Naive thymus-derived CD4-positive, alpha-beta T cell (primary cell): ENCODE measurements at regions of chr9 and their contacts with region 1.

Region 1: DNA sequence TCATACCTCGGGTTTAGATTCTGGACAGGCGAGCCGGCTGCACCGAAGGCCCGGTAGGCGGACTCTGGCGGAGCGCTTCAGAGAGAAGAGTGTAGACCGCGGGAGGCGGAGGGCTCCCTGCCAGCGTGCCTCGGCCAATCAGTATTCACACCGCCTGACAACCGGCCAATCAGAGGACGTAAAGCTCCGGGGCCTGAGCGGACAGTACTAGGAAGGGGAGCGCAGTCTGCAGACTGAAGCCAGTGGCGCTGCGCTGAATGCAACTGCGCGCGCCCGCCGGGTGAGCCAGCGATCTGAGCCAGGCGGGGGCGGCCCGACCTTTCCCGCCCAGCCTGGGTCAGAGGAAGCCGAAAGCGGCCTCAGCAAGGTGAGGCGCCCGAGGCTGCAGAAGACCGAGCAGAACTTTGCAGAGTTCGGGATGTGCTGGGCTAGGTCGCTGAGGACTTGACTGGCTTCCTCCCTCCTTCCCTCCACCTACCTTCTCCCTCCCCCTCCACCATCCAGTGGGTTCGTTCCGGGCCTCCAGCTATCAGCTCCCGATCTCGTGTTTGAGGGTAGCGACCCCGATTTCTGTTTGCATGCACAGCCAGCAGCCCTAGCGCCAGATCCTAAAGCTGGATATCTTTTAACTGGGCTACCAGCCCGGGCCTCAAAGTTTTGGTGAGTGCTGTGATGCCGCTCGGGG is at the start of gene DMRT2:
- DNase-seq: no peak
- ATAC-seq: peak; percentile 26
- H3K4me3 ChIP-seq: no peak within 1 kb of the TSS
- H3K4me3 Mint-ChIP-seq: peak within 1 kb of the TSS; percentile 31 to 91 (median 72)
- H3K27ac ChIP-seq: no peak within 1 kb of the TSS
- H3K27ac Mint-ChIP-seq: peak within 1 kb of the TSS in 2 of 9 donors; percentile 56 to 81
- H3K4me1 ChIP-seq: peaks cover 11 to 32% of the 10 kb centered on the region in 2 donors
- H3K4me1 Mint-ChIP-seq: peaks cover 38 to 62% (median 51%) of the 10 kb centered on the region in 7 donors
- H3K27me3 ChIP-seq: peaks cover 6 to 55% of the 10 kb centered on the region in 2 donors
- H3K27me3 Mint-ChIP-seq: peaks cover 79 to 94% (median 87%) of the 10 kb centered on the region in 5 donors
- total RNA-seq, gene DMRT2: 0.44 TPM in 1 of 5 experiments, not detected in the others

Region 2: GRCh38 chr9:841371-842209 is 208.7 kb before region 1 on chr9 and contains the start of gene DMRT1:
- CTCF ChIA-PET with region 1: no interaction called
- POLR2A ChIA-PET with region 1: no interaction called
- intact Hi-C with region 1: loop called in 1 of 2 experiments (anchors 2 kb)
- DNase-seq: no peak
- ATAC-seq: no peak
- H3K4me3 ChIP-seq: no peak within 1 kb of the TSS
- H3K4me3 Mint-ChIP-seq: peak within 1 kb of the TSS in 4 of 10 donors; percentile 20 to 62 (median 38)
- H3K27ac ChIP-seq: no peak within 1 kb of the TSS
- H3K27ac Mint-ChIP-seq: no peak within 1 kb of the TSS
- H3K4me1 ChIP-seq: no peaks in the 10 kb centered on the region
- H3K4me1 Mint-ChIP-seq: peaks cover 0 to 21% (median 14%) of the 10 kb centered on the region in 7 donors
- H3K27me3 ChIP-seq: peaks cover 3 to 4% of the 10 kb centered on the region in 2 donors
- H3K27me3 Mint-ChIP-seq: peaks cover 49 to 62% (median 59%) of the 10 kb centered on the region in 5 donors
- total RNA-seq, gene DMRT1: not detected